AG04449 (cell line): ENCODE measurements at regions of chr5 and their contacts with region 1.

Region 1: DNA sequence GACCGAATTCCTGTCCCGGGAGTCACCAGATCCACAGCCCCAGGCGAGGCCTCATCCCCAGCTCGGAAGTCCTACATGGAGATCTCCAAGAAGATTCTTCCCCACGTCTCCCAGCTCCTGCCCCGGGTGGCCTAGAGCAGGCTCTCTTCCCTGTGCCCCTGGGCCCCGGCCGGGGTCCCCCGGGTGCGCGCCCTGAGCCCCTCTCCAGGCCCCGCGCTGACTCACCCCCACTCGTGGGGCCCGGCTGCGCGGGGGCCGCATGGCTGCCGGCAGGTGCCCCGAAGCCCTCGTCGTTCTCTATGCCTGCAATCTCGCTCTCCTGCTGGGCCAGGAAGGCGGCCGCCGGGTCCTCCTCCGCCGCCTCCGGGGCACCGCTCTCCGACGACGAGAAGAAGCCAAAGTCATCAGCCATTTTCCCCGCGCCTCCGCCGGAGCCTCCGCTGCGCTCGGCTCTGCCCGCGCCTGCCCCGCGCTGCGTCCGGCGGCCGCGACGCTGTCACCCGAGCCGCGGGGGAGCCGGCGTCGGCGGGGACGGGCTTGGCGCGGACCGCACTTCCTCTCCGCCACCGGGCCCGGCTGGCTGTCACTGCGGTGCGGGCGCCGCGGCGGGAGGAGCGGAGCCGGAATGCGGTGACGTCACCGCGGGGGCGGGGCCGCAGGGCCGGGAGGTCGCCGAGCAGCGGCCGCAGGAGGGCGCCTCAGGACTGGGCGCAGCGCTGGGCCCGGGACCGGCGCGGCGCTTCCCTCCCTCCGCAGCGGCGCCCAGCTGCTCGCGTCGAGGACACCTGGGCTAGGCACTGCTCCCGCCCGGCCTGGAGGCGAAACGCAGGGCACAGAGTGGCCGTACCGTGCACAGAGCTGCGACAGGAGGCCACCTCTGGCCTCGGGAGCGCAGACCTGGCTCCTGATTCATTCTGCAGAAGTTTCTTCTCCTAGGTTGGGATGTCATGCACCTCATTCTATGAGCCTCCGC is at the start of gene CLTB:
- DNase-seq: no peak
- H3K4me3 ChIP-seq: peak within 1 kb of the TSS; percentile 72
- CTCF ChIP-seq: peak; percentile 73

Region 2: DNA sequence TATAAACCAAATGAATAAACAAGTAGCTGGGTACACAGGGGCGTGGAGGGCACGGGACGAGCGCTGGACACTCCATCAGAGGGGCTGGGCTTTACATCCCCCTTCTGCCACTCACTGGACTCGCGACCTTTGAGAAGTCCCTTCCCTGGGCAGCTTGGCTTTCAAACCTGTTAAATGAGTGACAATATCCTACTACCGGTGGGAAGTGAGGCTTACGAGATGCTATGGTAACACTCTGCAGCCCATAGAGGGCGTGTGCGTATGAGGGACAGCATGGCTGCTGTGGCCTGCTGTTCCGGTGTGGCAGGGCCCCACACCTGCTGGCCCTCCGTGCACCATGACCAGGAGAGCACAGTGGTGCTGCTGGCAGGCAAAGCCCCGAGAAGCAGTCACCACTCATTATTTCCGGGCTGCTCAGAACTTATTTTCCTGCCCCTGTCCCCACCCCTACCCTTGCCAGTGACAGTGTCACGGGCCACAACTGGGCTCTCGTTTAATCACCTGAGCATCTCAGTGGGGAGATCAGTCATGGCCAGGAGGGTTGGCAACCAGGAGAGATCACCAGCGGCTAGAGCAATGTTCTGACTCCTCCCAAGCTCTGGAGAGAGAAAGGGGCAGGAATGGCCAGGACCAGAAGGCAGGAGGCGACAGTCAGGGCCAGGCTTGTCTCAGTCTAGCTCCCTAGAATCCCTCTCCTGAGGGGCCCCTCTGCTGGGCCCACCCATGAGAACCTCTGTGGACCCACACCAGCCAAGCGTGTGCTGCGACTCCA is 10.4 kb before region 1 on chr5:
- CTCF ChIA-PET with region 1: interaction called, 26 read pairs
- POLR2A ChIA-PET with region 1: no interaction called
- DNase-seq: no peak
- H3K4me3 ChIP-seq: no peak overlapping the region
- CTCF ChIP-seq: no peak

Region 3: DNA sequence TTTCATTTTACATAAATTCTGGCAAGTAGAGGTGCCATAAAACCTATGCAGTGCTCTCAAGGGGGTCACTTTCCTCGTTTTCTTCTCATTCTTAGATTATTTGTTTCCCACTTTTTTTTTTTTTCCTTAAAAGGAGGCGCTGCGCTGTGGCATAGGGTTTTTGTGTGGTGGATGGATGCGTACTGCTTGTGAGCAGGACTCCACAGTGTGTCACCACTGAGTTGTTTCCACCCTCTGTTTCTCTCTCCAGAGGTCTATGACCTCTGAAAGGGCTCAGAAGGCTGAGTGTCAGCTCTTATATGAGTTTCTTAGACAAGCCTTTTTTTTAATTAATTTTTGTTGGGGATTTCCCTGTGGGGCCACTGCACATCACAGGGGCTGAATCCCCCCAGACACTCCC is 13.7 kb after region 1 on chr5:
- CTCF ChIA-PET with region 1: interaction called, 13 read pairs
- POLR2A ChIA-PET with region 1: interaction called, 5 read pairs
- DNase-seq: no peak
- H3K4me3 ChIP-seq: no peak overlapping the region
- CTCF ChIP-seq: no peak

Region 4: DNA sequence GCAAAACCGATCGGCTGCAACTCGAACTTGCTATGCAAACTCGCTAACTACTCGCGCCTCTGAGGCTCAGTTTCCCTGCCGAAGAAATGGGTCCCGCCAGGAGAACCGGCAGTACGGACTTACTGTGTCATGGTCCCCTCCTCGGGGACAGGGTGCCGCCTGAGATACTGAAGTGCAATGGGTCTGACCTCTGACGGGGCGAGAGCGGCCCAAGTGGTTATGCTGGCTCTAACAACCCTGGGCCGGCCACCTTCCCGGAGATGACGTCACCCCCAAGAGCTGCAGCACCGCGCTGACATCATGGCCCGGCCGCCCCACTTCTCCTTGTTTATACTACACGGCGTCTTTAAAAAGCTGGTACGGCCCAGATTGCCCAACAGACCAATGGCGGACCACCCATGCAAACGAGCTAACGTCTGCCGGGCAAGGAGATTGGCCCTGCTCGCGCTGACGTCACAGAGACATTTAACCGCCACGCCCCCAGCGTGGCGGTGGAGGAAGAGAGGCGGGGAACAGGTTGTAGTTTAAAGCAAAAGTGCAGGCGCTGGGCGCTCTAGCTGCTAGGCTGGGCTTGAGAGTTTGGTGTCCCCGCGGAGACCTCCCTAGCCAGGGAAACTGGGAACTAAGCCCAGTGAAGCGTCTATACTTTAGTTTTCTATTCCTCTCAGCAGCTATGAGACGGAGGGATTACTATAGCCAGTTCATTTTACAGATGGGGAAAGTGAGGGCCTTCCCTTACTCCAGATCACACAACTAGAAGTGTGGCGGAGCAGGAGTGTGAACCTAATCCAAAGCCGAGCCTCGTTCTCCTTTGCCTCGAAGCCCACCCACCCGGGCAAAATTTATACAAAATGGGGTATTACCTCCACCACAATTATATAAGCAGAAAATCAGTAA is 121.6 kb after region 1 on chr5:
- CTCF ChIA-PET with region 1: interaction called, 15 read pairs
- POLR2A ChIA-PET with region 1: interaction called, 11 read pairs
- DNase-seq: peak; percentile 97
- H3K4me3 ChIP-seq: peak overlapping the region; percentile 99
- CTCF ChIP-seq: no peak

Region 5: GRCh38 chr5:176543428-176544173 is 127.4 kb after region 1 on chr5:
- CTCF ChIA-PET with region 1: interaction called, 15 read pairs
- POLR2A ChIA-PET with region 1: interaction called, 11 read pairs
- DNase-seq: no peak
- H3K4me3 ChIP-seq: peak overlapping the region; percentile 59
- CTCF ChIP-seq: no peak

Region 6: DNA sequence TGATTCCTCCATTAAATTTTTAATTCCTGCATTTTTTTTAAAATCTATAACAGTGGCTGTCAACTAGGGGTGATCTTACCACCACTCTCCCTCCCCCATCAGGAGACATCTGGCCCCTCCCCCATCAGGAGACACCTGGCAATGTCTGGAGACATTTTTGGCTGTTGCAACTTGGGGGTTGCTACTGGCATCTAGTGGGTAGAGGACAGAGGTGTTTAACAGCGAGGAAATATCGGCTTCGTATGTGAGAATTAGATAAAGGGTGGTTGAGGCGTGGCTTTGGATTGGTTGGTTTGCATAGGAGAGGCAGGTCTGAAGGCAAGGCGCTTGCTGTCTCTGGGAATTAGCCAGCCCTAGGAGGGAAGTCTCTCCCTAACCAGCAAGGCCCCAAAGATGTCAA is 143.4 kb after region 1 on chr5:
- CTCF ChIA-PET with region 1: no interaction called
- POLR2A ChIA-PET with region 1: no interaction called
- DNase-seq: no peak
- H3K4me3 ChIP-seq: no peak overlapping the region
- CTCF ChIP-seq: no peak